Right ventricle myocardium inferior (tissue), 1 donor: ENCODE measurements at regions of chr1 and their contacts with region 1.

Region 1: DNA sequence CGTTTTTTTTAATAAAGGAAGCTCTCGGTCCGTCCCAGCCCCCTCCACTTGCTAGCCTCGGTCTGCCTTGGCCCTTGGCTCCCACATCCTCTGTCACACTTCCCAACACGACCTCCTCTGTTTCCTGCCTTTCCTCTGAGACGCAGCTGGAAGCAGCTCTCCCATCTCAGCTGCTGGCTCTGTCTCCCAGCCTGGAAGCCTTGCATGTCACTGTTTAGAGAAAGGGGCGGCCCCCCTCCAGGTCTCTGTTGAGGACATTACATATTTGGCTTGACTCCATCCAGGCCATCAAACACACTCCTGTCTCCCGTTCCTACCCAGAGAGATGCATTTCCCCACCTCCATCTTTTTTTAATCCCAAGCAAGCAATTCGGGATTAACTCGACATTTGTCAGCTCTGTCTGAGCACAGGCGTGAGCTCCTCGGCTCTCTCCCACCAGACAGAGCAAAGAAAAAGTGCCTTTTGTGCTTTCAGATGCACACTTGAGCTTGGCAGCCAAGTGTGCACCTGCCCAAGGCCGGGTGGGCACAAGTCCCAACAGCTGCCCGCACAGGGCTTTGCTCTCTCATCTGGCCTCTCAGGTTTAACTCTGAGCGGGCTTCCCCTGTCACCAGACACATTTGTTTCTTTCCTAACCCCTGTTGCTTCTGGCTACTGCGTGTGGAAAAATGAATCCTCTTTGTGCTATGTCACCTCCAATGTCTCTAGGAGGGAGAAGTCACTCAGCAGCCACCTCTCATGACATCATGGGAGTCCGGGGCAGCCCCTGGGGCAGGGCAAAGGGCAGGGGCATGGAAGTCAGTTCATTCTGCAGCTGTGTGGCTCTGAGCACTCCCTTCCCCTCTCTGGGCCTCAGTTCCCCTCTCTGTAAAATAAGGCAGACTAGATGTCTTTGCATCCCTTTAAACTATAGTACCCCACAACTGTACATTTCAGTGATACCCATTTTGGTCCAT is 108.3 kb downstream of the KCND3 start:
- DNase-seq: peak; percentile 69
- ATAC-seq: peak; percentile 56

Region 2: DNA sequence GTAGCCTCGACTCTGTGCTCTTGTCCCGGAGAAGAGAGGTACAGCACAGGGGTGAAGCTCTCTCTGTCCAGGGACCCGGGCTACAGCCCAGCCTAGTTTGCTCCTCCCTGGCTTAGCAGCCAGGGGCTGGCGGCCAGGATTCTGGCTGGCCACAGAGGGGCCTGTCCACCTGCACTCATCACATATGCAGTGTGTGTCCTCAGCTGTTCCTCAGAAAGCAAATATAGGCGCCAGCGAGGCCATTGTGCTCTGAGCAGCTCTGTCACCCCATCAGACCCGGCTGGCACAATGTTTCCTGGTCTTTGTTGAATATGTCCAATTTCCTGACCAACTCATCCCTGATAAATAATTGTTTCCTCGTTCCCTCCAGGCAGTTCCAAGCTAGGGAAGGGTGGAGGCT is 79.9 kb after region 1 on chr1:
- intact Hi-C with region 1: loop called (anchors 5 kb)
- DNase-seq: no peak
- ATAC-seq: peak; percentile 67

Region 3: GRCh38 chr1:111967064-111967690 is 86.0 kb after region 1 on chr1:
- intact Hi-C with region 1: loop called (anchors 5 kb)
- DNase-seq: no peak
- ATAC-seq: peak; percentile 68